ENCODE measurements at regions of chr12 and their contacts with region 1.

Region 1: DNA sequence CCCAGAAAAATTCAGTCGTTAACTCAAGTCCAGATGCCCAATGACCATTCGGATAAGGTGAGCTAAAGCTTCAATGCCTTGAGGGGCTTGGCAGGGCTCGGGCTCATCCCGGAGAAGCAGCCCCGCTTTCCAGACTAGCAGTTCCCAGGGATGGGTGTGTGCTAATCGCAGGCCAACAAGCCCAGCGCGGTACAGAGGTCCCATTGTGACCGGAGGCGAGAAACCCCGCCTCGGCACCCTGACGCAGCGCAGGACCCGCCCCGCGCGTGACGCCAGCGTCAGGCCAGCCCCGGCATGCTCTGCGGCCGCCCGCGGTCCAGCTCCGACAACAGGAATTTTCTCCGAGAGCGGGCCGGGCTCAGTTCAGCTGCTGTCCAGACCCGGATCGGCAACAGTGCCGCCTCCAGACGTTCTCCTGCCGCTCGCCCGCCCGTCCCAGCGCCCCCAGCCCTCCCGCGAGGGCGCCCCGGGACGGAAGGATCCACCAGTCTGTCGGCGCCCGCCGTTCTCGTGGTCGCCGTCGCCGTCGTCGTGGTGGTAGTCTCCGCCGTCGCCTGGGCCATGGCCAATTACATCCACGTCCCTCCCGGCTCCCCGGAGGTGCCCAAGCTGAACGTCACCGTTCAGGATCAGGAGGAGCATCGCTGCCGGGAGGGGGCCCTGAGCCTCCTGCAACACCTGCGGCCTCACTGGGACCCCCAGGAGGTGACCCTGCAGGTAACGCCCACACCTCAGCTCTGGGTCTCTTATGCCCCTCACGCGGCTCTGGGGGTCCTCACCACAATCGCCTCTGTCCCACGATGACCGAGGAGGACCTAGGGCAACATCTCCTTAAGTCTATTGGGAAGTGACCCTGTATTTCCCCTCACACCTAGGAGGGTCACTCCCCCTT is at the start of gene ETNK1:
- DNase-seq: peak; percentile 92
- H3K4me3 Mint-ChIP-seq: peak within 1 kb of the TSS; percentile 89
- H3K27ac Mint-ChIP-seq: peak within 1 kb of the TSS; percentile 87
- H3K4me1 Mint-ChIP-seq: peaks cover 35% of the 10 kb centered on the region
- H3K27me3 Mint-ChIP-seq: no peaks in the 10 kb centered on the region
- total RNA-seq, gene ETNK1: 59.0 to 61.0 TPM

Region 2: GRCh38 chr12:21451529-21451928 is 1173.6 kb before region 1 on chr12:
- CTCF ChIA-PET with region 1: no interaction called
- POLR2A ChIA-PET with region 1: no interaction called
- intact Hi-C with region 1: loop called (anchors 10 kb)
- DNase-seq: no peak
- H3K4me3 Mint-ChIP-seq: no peak overlapping the region
- H3K27ac Mint-ChIP-seq: no peak overlapping the region
- H3K4me1 Mint-ChIP-seq: peaks cover 40% of the 10 kb centered on the region
- H3K27me3 Mint-ChIP-seq: no peaks in the 10 kb centered on the region

Region 3: DNA sequence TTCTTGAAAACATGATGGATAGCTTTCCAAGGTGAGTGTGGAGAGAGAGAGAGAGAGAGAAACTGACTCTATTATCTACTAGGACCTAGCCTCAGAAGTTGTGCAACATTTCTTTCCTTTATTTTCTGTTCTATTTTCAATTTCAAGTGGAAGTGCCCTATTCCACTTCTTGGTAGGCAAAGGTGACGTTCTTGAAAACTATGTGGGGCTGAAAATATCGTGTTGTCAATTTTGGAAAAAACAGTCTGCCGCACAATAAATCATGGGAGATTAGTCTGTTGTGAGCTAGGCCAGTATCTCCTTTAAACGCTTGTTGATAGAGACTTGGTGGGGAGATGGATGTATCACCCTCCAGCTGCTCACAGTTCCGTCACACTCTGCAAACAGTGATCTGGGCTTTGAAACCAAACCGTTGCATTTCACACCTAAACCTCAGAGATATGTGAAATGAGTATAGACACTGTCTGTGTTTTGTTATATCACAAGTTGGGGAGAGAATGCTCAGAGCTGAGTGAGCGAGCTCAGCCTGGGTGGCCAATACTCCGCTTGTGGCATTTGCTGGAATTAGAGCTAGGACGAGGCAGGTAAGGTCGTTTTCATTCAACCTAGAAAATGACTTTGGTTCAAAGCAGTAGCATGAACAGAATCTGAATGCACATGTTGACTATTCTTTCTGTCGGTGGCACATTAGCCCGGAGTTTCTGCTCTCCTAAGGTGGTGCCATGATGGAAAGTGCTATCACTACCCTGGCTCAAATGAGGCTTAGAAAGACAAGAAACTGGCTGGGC is 215.5 kb before region 1 on chr12:
- CTCF ChIA-PET with region 1: no interaction called
- POLR2A ChIA-PET with region 1: no interaction called
- intact Hi-C with region 1: loop called (anchors 5 kb)
- DNase-seq: peak; percentile 78
- H3K4me3 Mint-ChIP-seq: peak overlapping the region; percentile 69
- H3K27ac Mint-ChIP-seq: peak overlapping the region; percentile 88
- H3K4me1 Mint-ChIP-seq: peaks cover 49% of the 10 kb centered on the region
- H3K27me3 Mint-ChIP-seq: no peaks in the 10 kb centered on the region

Region 4: DNA sequence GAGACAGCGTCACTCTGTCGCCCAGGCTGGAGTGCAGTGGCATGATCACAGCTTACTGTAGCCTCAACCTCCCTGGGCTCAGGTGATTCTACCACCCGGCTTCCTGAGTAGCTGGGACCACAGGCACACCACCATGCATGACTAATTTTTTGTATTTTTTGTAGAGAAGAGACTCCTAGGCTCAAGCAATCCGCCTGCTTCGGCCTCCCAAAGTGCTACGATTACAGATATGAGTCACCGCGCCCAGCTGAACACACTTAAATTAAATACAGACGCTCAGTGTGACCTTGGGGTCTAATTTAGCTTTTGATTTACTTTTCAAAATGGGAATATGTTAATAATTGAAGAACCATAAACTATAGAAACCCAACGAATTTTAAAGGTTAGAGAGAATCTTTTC is 157.9 kb before region 1 on chr12:
- CTCF ChIA-PET with region 1: no interaction called
- POLR2A ChIA-PET with region 1: no interaction called
- intact Hi-C with region 1: no loop called
- DNase-seq: no peak
- H3K4me3 Mint-ChIP-seq: no peak overlapping the region
- H3K27ac Mint-ChIP-seq: no peak overlapping the region
- H3K4me1 Mint-ChIP-seq: no peaks in the 10 kb centered on the region
- H3K27me3 Mint-ChIP-seq: no peaks in the 10 kb centered on the region

Region 5: DNA sequence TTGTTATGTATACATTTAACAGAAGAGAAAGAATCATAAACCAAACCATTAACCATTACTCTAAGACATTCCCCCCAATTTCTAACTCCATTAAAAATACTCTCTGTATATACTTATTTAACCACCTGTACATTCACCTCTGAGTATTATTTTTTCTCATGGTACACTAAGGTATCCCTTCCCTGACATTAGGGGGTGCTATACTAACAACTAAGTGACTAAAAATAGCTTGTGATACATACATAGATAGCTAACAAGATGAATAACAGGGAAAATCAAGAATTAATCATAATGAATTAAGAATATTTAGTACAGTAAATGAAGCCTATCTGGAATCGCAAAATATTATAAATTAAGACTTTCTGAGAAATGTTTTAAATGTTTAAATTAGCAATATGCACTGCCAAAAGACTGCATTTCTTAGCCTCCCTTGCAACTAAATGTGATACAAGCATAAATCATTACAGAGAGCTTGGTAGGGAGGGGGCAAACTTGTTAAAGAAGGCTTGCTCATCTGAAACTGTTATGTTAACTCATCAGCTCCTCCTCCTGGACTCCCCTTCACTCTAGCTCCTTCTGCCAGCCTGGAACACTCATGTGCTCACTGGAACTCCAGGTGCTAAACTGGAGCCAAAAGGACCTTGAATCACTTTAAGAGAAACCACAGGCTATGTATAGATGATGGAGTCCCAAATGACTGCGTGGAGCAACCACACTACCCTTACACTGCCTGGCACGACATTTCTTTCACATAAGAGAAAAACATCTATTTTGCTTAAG is 95.6 kb before region 1 on chr12:
- CTCF ChIA-PET with region 1: interaction called, 11 read pairs
- POLR2A ChIA-PET with region 1: no interaction called
- intact Hi-C with region 1: loop called (anchors 1 kb)
- DNase-seq: no peak
- H3K4me3 Mint-ChIP-seq: no peak overlapping the region
- H3K27ac Mint-ChIP-seq: no peak overlapping the region
- H3K4me1 Mint-ChIP-seq: peaks cover 4% of the 10 kb centered on the region
- H3K27me3 Mint-ChIP-seq: no peaks in the 10 kb centered on the region

Region 6: GRCh38 chr12:22658214-22658613 is 33.1 kb after region 1 on chr12:
- CTCF ChIA-PET with region 1: no interaction called
- POLR2A ChIA-PET with region 1: interaction called, 6 read pairs
- intact Hi-C with region 1: loop called (anchors 1 kb)
- DNase-seq: peak; percentile 44
- H3K4me3 Mint-ChIP-seq: peak overlapping the region; percentile 27
- H3K27ac Mint-ChIP-seq: peak overlapping the region; percentile 65
- H3K4me1 Mint-ChIP-seq: peaks cover 32% of the 10 kb centered on the region
- H3K27me3 Mint-ChIP-seq: no peaks in the 10 kb centered on the region

Measured in activated CD4-positive, alpha-beta memory T cell treated with anti-CD3 and anti-CD28 coated beads for 36 hours (primary cell).